Activated naive CD4-positive, alpha-beta T cell treated with anti-CD3 and anti-CD28 coated beads for 36 hours (primary cell): ENCODE measurements at regions of chr19 and their contacts with region 1.

Region 1: DNA sequence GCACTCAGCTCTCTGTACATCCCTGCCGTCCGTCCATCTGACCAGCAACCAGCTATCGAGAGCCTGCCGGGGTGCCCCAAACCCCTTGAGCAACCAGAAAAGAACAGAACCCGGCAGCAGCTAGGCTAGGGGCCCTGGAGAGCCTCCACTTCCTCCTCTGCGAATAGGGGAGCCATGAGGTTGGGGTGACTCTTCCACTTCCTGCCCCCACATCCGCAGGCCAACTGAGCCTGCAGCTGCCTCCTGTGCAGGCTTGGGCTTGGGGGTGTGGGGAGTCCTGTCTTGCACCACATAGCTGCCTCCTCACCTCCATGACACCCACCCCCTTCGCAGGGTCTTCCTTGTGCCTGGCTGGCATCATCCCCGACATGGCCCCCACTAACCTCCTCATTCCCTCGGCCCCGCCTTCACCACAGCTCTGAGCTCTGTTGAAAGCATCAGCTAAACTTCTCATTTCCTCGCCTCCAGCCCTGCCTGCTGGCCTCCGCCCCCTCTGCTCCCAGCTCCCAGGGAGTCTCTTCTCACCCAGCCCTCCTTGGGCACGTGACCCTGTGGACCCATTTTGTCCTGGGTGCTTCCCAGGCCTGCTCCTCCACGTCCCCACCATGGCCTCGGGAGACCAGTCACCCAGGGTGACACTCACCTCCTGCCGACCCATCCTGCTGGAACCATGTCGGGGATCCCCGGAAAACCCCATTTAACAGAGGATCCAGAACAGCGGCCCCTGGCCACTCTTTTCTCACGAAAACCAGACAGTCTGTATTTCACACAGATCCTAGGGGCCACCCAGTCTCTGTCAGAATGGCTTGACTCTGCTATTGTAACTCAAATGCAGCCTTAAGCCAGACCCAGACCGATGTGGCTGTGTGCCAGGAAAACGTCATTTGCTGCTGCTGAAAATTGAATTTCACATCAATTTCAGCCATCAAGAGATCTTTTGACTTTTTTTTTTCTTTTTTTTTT is 50.4 kb downstream of the MYO9B start:
- DNase-seq: peak; percentile 79
- H3K4me3 Mint-ChIP-seq: peak overlapping the region; percentile 72
- H3K27ac Mint-ChIP-seq: peak overlapping the region; percentile 95
- H3K4me1 Mint-ChIP-seq: peaks cover 38% of the 10 kb centered on the region
- H3K27me3 Mint-ChIP-seq: no peaks in the 10 kb centered on the region

Region 2: DNA sequence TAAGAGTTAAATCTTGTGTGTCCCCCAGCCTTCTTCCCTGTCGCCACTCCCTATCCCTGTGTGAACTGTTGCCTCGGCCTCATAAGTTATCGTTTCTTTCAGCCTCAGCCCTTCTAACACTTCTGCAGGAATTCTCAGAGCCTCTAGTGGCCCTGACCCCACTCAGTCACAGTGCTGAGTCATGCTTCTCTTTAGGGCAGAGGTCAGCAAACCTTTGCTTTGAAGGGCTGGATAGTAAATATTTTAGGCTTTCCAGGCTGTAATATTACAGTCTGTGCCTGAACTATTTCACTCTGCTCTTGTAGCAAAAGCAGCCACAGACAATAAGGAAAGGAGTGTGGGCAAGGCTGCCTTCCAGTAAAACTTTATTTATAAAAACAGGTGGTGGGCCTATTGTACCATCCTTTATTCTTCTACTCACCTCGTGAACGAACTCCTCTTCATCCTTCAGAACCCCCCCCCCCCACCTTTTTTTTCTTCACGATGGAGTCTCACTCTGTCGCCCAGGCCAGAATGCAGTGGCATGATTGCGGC is 28.3 kb before region 1 on chr19:
- CTCF ChIA-PET with region 1: no interaction called
- intact Hi-C with region 1: no loop called
- DNase-seq: no peak
- H3K4me3 Mint-ChIP-seq: no peak overlapping the region
- H3K27ac Mint-ChIP-seq: no peak overlapping the region
- H3K4me1 Mint-ChIP-seq: peaks cover 9% of the 10 kb centered on the region
- H3K27me3 Mint-ChIP-seq: no peaks in the 10 kb centered on the region

Region 3: GRCh38 chr19:17170538-17171297 is 44.7 kb after region 1 on chr19:
- CTCF ChIA-PET with region 1: no interaction called
- intact Hi-C with region 1: loop called (anchors 1 kb)
- DNase-seq: peak; percentile 76
- H3K4me3 Mint-ChIP-seq: no peak overlapping the region
- H3K27ac Mint-ChIP-seq: peak overlapping the region; percentile 87
- H3K4me1 Mint-ChIP-seq: peaks cover 18% of the 10 kb centered on the region
- H3K27me3 Mint-ChIP-seq: no peaks in the 10 kb centered on the region

Region 4: DNA sequence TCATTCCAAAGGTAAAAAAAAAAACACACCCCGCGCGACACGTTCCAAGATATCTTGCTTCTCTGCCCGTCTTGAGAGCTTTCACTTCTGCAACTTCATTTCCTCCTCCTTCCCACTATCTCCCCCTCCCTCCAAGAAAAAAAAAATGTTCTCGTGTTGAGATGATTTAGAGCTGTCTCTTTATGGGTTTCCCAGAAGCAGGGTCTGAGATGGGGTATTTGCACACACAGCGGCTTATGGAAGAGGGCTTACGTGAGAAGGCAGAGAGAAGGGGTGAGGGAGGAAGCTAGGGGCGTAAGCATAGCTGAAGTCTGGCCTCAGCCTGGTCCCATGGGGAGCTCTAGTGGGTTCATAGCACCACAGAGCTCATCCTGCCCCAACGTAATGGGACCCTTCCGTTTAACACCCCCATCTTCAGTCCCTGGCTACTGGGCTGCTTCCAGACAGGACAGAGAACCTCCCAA is 57.9 kb after region 1 on chr19:
- CTCF ChIA-PET with region 1: interaction called, 5 read pairs
- intact Hi-C with region 1: loop called (anchors 2 kb)
- DNase-seq: peak; percentile 38
- H3K4me3 Mint-ChIP-seq: peak overlapping the region; percentile 66
- H3K27ac Mint-ChIP-seq: peak overlapping the region; percentile 84
- H3K4me1 Mint-ChIP-seq: peaks cover 19% of the 10 kb centered on the region
- H3K27me3 Mint-ChIP-seq: no peaks in the 10 kb centered on the region

Region 5: DNA sequence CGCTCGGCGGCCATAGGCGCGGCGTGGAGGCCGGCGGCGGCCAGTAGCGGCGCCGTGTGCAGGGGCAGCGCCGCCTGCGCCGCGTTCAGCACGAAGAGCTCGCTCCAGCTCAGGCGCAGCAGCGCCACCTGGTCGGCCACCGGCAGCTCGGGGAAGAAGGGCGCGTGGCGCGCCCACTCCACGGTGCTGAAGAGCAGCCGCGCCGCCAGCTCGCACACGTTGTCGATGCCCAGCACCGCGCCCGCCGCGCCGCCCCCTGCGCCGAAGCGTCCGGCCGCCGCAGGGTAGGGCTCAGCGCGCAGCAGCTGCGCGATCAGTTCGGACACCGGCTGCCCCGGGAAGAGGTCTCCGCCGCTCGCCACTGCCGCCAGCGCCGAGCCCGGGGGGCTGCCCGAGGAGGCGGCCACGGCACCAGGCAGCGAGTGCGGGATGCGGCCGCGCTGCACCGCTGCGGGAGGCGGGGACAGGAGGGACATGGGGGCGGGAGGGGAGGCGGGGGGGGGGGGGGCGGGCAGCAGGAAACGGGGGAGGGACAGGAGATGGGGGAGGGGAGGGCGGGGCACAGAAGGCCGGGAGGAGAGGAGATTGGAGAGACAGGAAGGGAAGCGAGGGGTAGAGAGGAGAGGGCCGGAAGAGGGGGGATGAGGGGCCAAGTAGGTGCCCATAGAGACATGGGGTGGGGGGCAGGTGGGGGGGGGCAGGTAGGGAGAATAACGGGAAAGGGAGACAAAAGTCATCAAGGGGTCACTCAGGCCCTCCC is 109.8 kb after region 1 on chr19:
- CTCF ChIA-PET with region 1: no interaction called
- intact Hi-C with region 1: loop called (anchors 5 kb)
- DNase-seq: peak; percentile 79
- H3K4me3 Mint-ChIP-seq: peak overlapping the region; percentile 83
- H3K27ac Mint-ChIP-seq: peak overlapping the region; percentile 68
- H3K4me1 Mint-ChIP-seq: peaks cover 19% of the 10 kb centered on the region
- H3K27me3 Mint-ChIP-seq: no peaks in the 10 kb centered on the region